ENCODE measurements at regions of chr5 and their contacts with region 1.

Region 1: DNA sequence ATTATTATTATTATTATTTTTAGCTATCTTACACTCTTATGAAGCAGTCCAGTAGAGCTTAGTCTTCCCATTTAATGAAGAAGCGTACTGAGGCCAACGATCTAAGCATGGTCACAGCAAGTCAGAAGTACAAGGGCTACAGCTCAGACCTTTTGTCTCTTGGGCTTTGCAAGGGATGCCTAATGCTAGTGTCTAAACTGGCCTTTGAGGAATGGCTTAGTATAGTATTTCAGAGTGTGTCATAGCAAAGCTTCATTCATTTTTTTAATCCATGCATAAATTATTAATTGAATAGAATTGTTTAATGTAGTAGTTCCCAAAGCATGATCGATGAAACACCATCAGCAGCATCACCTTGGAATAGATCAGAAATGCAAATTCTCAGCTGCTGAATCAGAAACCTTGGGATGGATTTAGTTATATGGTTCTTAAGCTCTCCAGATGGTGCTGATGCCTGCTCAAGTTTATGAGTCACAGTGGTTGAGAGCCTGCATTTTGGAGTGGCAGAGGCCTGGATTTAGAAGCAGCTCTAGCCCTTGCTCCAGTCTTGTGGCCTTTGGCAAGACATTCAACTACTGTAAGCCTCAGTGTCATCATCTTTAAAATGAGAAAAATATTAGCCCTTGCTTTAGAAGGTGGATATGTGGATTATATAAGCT is 6.1 kb downstream of the IL12B start:
- DNase-seq: no peak
- ATAC-seq: no peak
- H3K4me3 ChIP-seq: no peak overlapping the region
- H3K27ac ChIP-seq: no peak overlapping the region
- H3K4me1 ChIP-seq: no peaks in the 10 kb centered on the region
- H3K27me3 ChIP-seq: peaks cover 5% of the 10 kb centered on the region; the same call in 1 of the 2 replicates
- CTCF ChIP-seq: no peak

Region 2: GRCh38 chr5:159339451-159339850 is 15.2 kb after region 1 on chr5:
- CTCF ChIA-PET with region 1: no interaction called
- POLR2A ChIA-PET with region 1: interaction called, 20 read pairs
- in situ Hi-C with region 1: no loop called
- intact Hi-C with region 1: no loop called
- DNase-seq: no peak
- ATAC-seq: no peak
- H3K4me3 ChIP-seq: no peak overlapping the region
- H3K27ac ChIP-seq: no peak overlapping the region
- H3K4me1 ChIP-seq: no peaks in the 10 kb centered on the region
- H3K27me3 ChIP-seq: no peaks in the 10 kb centered on the region
- CTCF ChIP-seq: no peak

Measured in Panc1 (cell line).